Right ventricle myocardium inferior (tissue), 1 donor: ENCODE measurements at regions of chr20 and their contacts with region 1.

Region 1: DNA sequence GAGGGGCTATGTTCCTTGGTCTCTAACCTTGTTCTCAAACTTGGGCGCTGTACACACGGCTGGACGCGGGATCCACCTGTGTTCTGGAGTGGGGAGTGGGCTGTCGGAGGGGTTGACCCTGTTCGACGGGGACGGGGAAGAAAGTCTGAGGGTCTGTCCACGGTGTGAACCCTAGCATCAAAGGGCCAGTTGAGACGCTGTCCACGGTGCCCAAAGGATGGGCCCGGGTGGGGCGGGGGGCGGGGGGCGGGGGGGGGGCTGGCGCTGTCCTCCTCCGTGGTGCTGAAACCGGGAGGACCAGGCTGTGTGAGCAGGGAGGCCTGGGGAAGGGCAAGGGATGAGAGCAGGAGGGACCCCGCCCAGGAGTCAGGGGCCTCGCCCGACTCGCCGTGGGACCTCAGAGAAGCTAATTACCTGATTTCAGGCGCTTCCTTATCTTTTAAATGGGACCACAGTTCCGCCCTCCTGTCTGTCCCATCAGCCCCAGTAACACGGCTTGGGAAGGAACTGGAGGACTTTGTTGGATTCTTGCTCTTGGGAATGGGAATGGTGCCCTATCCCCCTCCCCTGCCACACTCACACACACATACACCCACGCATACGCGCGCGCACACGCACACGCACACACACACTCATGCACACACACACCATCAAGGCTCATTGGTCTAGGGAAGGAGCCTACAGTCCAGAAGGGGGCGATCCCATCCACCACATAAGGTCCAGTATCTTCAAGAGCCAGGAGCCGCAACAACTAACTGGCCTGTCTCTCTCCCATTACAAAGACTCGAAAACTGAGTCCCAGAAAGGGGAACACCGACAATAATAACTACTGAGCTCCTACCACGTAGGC is 1.0 kb upstream of the VSTM2L start:
- DNase-seq: no peak
- ATAC-seq: peak; percentile 51

Region 2: DNA sequence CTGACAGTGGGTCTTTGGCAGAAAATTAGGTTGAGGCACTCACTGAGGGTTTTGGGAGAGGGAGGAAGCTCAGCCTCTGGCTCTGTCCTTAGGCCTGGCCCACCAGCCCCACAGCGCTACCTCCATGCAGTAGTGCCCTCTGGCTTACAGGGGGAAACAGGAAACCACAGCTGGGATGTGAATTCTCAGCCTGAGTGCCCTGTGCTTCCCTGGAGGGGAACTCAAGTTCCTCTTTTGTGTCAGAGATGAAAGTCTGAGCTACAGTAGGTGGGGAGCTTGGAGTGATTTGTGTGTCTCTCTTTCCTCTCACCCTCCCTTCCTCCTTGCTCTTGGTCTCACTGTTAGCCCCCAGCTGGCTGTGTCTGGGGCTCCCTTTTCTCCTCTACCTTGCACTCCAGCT is 326.0 kb before region 1 on chr20:
- intact Hi-C with region 1: loop called (anchors 10 kb)
- DNase-seq: no peak
- ATAC-seq: no peak

Region 3: GRCh38 chr20:38049800-38050199 is 147.9 kb after region 1 on chr20:
- intact Hi-C with region 1: loop called (anchors 5 kb)
- DNase-seq: no peak
- ATAC-seq: no peak

Region 4: GRCh38 chr20:38073307-38074071 is 171.6 kb after region 1 on chr20:
- intact Hi-C with region 1: no loop called
- DNase-seq: no peak
- ATAC-seq: peak; percentile 87